GM12878 (cell line): ENCODE measurements at regions of chr2 and their contacts with region 1.

Region 1: DNA sequence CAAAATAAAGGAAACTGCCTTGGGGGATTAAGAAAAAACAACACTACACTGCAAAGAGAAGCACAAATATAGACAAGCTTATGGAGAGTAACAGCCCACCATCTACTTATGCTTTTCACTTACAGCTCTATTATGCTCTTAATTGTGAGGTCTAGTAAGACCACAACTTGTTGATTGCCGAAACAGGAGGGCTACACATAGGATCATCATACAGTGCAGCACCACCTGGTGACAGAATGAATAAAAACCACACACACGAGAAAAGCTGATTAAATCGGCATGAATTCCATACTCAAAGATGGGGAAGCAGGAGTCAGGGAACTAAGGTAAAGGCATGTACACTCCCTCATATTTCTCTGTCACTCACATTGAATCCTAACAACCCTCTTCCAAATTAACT is 259.2 kb downstream of the IKZF2 start:
- DNase-seq: no peak
- ATAC-seq: peak; percentile 68
- H3K4me3 ChIP-seq: no peak overlapping the region
- H3K27ac ChIP-seq: no peak overlapping the region
- H3K4me1 ChIP-seq: no peaks in the 10 kb centered on the region
- H3K27me3 ChIP-seq: no peaks in the 10 kb centered on the region
- CTCF ChIP-seq: peak in 2 of 3 experiments; percentile 6 to 34; a peak in 2 of 6 replicates
- EP300 ChIP-seq: no peak
- POLR2A ChIP-seq: no peak
- RAD21 ChIP-seq: no peak

Region 2: GRCh38 chr2:212595037-212595654 is 297.0 kb before region 1 on chr2:
- CTCF ChIA-PET with region 1: no interaction called
- POLR2A ChIA-PET with region 1: no interaction called
- RAD21 ChIA-PET with region 1: no interaction called
- SMC1A ChIA-PET with region 1: no interaction called
- in situ Hi-C with region 1: no loop called
- intact Hi-C with region 1: loop called (anchors 10 kb)
- DNase-seq: peak; percentile 17
- ATAC-seq: peak; percentile 70
- H3K4me3 ChIP-seq: no peak overlapping the region
- H3K27ac ChIP-seq: no peak overlapping the region
- H3K4me1 ChIP-seq: no peaks in the 10 kb centered on the region
- H3K27me3 ChIP-seq: no peaks in the 10 kb centered on the region
- CTCF ChIP-seq: peak in 2 of 3 experiments; percentile 22 to 50; a peak in 2 of 6 replicates
- EP300 ChIP-seq: no peak
- POLR2A ChIP-seq: no peak
- RAD21 ChIP-seq: peak; percentile 39; the same call in 1 of the 2 replicates